ENCODE measurements at regions of chr11 and their contacts with region 1.

Region 1: GRCh38 chr11:111586388-111586831 is 15.8 kb upstream of the SIK2 start:
- DNase-seq: peak; percentile 62
- H3K4me3 ChIP-seq: no peak overlapping the region
- H3K27ac ChIP-seq: no peak overlapping the region
- H3K4me1 ChIP-seq: peaks cover 13% of the 10 kb centered on the region
- H3K27me3 ChIP-seq: no peaks in the 10 kb centered on the region
- CTCF ChIP-seq: peak; percentile 60 to 65

Region 2: DNA sequence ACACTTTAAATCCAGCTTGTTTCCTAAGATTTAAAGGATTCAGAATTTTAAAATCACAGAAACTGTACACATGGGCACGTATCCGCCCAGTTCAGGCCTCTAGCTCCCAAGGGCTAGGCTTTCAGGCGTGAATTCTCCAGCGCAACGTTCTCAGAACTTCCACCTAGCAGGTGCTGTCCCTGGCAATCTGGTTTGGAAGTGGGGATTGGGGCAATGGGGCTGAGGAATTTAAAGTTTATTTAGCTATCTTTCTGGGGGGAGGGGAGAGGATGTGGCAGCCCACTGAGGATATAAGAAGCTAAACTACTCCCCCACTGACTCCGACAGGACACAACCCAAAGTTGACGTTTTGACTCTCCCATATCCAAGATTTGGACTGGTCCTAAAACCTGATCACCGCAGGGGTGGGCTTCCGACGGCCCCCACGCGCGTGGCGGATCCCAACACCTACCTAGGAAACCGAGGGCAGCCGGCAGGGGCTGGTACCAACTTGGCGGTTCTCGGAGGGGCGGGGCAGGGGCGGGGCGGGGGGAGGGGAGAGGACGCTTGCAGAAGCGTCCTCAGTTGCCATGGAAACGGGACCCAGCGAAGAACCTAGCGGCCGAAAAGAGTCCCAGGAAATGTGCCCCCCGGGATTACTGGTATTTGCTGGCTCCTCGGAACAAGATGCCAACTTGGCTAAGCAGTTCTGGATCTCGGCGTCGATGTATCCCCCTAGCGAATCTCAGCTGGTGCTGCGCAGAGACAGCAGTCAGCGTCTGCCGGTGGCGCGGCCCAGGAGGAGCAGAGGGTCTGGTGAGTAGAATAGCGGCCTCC is 72.0 kb before region 1 on chr11 and contains the start of gene HOATZ:
- CTCF ChIA-PET with region 1: no interaction called
- dilution Hi-C with region 1: no loop called
- in situ Hi-C with region 1: no loop called
- intact Hi-C with region 1: no loop called
- DNase-seq: no peak
- H3K4me3 ChIP-seq: no peak within 1 kb of the TSS
- H3K27ac ChIP-seq: peak within 1 kb of the TSS; percentile 53
- H3K4me1 ChIP-seq: peaks cover 36% of the 10 kb centered on the region
- H3K27me3 ChIP-seq: no peaks in the 10 kb centered on the region
- CTCF ChIP-seq: no peak
- total RNA-seq, gene HOATZ: not detected

Region 3: DNA sequence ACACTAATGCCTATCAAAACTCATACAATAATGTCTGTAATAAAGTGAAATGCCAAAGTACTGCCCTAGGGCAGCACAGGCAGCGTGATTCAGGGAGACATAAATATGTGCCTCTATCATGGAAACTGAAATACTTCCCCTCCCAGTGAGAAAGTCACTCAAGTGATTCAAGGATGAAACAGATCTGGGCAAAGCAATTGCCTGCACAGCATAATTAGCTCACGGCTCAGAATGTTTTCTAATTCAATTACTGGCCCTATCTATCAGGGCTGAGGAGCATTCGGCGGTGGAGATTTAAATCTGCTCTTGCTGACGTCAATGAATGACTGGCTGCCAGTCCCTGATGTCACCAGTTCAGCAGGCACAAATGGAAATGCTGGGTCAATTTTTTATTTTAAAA is 207.5 kb after region 1 on chr11:
- CTCF ChIA-PET with region 1: no interaction called
- dilution Hi-C with region 1: no loop called
- in situ Hi-C with region 1: no loop called
- intact Hi-C with region 1: no loop called
- DNase-seq: peak; percentile 65
- H3K4me3 ChIP-seq: no peak overlapping the region
- H3K27ac ChIP-seq: no peak overlapping the region
- H3K4me1 ChIP-seq: no peaks in the 10 kb centered on the region
- H3K27me3 ChIP-seq: no peaks in the 10 kb centered on the region
- CTCF ChIP-seq: no peak

Region 4: DNA sequence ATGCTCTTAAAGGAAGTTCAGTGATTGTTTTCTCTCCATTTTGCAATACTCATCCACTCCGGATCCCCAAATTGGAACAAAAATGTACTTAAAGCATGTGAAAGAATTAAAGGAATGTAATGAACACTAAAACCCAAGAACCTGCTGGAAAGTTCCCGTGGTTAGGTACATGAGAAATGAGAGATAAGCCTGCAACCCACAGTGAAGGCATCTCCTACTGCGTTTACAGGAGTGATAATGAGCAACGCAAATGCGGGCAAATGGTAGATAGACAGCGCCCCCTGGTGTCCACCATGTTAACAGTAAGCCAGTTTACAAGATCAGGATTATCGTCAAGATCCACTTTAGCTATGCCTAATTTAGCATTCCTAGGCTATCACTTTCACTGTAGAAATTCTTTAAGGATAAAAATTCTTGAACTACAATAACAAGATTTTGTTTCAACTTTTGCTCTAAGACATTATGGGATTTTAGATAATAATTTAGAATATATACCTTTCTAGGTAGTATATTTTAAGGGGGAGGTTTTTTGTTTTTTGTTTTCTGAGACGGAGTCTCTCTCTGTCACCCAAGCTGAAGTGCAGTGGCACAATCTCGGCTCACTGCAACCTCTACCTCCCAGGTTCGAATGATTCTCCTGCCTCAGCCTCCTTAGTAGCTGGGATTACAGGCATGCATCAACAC is 255.1 kb after region 1 on chr11:
- CTCF ChIA-PET with region 1: no interaction called
- dilution Hi-C with region 1: no loop called
- in situ Hi-C with region 1: loop called in 1 of 2 experiments (anchors 10 kb)
- intact Hi-C with region 1: loop called (anchors 1 kb)
- DNase-seq: peak; percentile 60
- H3K4me3 ChIP-seq: no peak overlapping the region
- H3K27ac ChIP-seq: no peak overlapping the region
- H3K4me1 ChIP-seq: no peaks in the 10 kb centered on the region
- H3K27me3 ChIP-seq: no peaks in the 10 kb centered on the region
- CTCF ChIP-seq: peak; percentile 87 to 88

Measured in mammary epithelial cell (primary cell).